Activated CD4-positive, alpha-beta T cell treated with anti-CD3 and anti-CD28 coated beads, Interleukin-2, amount 10 ng/mL, durations not matched to agents 24 days and 14 days (primary cell): ENCODE measurements at regions of chr3 and their contacts with region 1.

Region 1: DNA sequence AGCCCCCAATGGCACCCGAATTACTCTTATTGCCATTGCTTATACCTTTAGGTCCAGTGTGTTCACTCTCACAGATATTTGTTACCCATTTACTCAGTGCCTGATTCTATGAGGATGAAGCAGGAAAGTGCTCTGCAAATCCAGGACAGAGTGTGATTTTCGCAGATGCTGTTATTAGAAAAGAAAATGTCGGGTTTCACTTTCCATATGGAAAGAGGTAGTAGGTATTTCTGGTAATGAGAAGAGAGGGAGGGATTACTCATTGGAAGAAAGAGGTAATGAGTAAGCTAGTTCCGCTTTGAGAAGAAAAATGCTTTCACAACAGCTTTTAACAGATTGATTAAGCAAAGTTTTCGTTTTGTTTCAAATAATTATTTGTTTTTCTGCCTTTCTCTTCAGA is 336.3 kb upstream of the CFAP20DC start:
- DNase-seq: no peak
- H3K4me3 Mint-ChIP-seq: peak overlapping the region; percentile 31
- H3K27ac Mint-ChIP-seq: peak overlapping the region; percentile 98
- H3K4me1 Mint-ChIP-seq: peaks cover 85% of the 10 kb centered on the region
- H3K27me3 Mint-ChIP-seq: no peaks in the 10 kb centered on the region

Region 2: DNA sequence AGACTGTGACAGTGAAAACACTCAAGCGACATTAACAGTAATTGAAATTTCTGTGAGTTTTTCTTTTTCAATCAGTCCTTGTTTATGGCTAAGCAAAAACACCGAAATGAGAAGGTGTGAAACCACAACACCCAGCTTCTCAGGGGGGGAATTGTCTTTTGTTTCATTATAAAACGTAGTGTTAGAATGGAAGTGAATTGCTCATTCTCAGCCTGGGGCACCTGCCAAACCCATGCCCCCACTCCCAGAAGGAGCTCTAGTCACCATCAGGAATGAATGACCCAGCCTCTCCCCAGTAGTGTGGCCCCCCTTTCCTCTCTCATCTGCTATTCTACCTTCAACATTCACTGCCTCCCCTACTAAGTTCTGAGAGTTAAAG is 150.5 kb before region 1 on chr3:
- intact Hi-C with region 1: loop called (anchors 1 kb)
- DNase-seq: peak; percentile 76
- H3K4me3 Mint-ChIP-seq: peak overlapping the region; percentile 4
- H3K27ac Mint-ChIP-seq: peak overlapping the region; percentile 66
- H3K4me1 Mint-ChIP-seq: peaks cover 17% of the 10 kb centered on the region
- H3K27me3 Mint-ChIP-seq: no peaks in the 10 kb centered on the region

Region 3: DNA sequence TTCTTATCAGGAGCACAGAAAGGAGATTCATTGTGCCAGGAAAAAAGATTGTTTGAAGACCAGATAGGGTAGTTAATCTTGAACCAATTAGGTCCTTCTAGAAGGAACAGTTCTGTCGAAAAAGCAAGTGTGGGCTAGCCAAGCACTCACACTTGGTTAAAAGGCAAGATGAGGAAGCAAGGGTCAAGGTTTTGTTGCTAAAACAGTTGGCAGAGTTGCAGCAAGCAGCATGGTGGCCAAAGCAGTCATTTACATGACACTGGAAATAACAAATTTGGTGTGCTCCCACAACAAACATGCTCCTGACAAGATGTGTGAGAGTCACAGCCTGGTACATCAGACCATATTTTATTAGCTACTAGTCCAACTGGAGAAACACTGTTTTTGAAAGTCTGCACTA is 108.3 kb before region 1 on chr3:
- intact Hi-C with region 1: no loop called
- DNase-seq: no peak
- H3K4me3 Mint-ChIP-seq: no peak overlapping the region
- H3K27ac Mint-ChIP-seq: no peak overlapping the region
- H3K4me1 Mint-ChIP-seq: no peaks in the 10 kb centered on the region
- H3K27me3 Mint-ChIP-seq: peaks cover 4% of the 10 kb centered on the region

Region 4: GRCh38 chr3:59424268-59425010 is 38.3 kb after region 1 on chr3:
- intact Hi-C with region 1: loop called (anchors 1 kb)
- DNase-seq: peak; percentile 71
- H3K4me3 Mint-ChIP-seq: peak overlapping the region; percentile 1
- H3K27ac Mint-ChIP-seq: peak overlapping the region; percentile 73
- H3K4me1 Mint-ChIP-seq: peaks cover 52% of the 10 kb centered on the region
- H3K27me3 Mint-ChIP-seq: no peaks in the 10 kb centered on the region

Region 5: GRCh38 chr3:59526999-59527398 is 140.8 kb after region 1 on chr3:
- intact Hi-C with region 1: loop called (anchors 1 kb)
- DNase-seq: no peak
- H3K4me3 Mint-ChIP-seq: no peak overlapping the region
- H3K27ac Mint-ChIP-seq: peak overlapping the region; percentile 68
- H3K4me1 Mint-ChIP-seq: peaks cover 11% of the 10 kb centered on the region
- H3K27me3 Mint-ChIP-seq: no peaks in the 10 kb centered on the region

Region 6: DNA sequence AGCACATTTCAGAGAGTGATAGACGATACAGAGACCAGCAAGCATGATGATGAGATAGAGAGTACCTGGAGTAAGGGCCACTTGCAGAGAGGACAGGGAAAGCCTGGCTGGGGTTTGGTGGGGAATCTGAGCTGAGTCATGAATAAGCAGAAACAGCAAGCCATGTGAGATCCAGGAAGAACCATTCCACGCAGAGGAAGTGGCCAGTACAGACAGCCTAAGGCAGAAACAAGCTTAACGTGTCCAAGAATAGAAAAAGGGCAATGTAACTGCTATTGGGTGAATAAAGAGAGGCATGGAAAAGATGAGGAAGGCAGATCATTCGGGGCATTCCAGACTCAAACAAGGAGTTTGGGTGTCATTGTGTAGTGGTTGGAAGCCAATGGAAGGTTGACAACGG is 479.9 kb after region 1 on chr3:
- intact Hi-C with region 1: loop called (anchors 1 kb)
- DNase-seq: no peak
- H3K4me3 Mint-ChIP-seq: no peak overlapping the region
- H3K27ac Mint-ChIP-seq: no peak overlapping the region
- H3K4me1 Mint-ChIP-seq: peaks cover 29% of the 10 kb centered on the region
- H3K27me3 Mint-ChIP-seq: no peaks in the 10 kb centered on the region

Region 7: DNA sequence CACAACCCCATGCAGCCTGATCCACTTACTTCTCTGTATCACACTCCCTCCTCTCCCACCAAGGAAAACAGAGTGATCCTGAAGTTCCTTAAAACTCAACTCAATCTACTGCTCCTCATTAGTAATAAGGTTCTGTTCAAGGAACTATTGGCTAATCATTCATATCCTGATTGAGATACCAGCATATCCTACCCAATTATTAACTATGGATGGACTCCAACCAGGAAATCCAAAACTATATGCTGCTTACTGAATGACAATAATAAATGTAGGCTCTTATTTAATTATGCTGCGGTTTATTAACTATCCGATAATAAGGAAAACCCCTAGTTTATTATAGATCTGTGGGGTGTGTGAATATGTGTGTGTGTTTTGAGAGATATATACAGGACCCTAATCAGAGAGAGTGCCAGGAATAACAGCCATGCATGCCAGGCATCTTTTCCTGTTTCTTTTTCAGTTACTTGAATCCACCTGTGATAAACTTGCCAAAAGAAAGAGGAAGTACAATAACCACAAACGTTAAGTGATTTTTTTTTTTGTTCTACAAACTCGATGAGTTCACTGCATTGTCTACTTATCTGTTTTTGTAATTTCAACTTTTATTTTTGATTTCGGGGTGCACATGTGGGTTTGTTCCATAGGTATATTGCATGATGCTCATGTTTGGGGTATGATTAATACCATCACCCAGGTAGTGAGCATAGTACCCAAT is 695.4 kb after region 1 on chr3:
- intact Hi-C with region 1: loop called (anchors 5 kb)
- DNase-seq: no peak
- H3K4me3 Mint-ChIP-seq: peak overlapping the region; percentile 76
- H3K27ac Mint-ChIP-seq: peak overlapping the region; percentile 100
- H3K4me1 Mint-ChIP-seq: peaks cover 64% of the 10 kb centered on the region
- H3K27me3 Mint-ChIP-seq: peaks cover 2% of the 10 kb centered on the region